Heart right ventricle (tissue), 16 donors: ENCODE measurements at regions of chr14 and their contacts with region 1.

Region 1: DNA sequence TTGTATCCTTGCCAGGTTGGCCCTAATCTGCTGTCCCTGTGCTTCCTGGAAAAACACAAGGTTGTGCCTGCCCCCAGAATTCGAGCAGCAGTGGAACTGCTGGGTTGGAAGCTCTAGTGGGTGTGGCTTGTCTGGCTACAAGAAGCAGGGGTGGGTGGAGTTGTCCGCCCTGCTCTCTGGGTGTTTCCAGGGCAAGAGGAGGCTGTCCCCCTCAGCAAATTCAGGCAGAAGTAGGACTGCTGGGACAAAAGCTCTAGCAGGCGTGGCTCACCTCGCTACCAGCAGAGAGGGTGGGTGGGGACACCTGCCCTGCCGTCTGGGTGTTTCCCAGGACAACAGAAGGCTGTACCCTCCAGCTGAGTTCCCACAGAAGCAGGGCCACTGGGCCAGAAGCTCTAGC is 72.8 kb upstream of the NPAS3 start:
- DNase-seq: no peak
- ATAC-seq: peak in 1 of 8 donors; percentile 42
- H3K4me3 ChIP-seq: no peak overlapping the region
- H3K27ac ChIP-seq: no peak overlapping the region
- H3K4me1 ChIP-seq: peaks cover 0 to 9% (median 0%) of the 10 kb centered on the region in 9 donors
- H3K27me3 ChIP-seq: no peaks in the 10 kb centered on the region
- CTCF ChIP-seq: no peak

Region 2: DNA sequence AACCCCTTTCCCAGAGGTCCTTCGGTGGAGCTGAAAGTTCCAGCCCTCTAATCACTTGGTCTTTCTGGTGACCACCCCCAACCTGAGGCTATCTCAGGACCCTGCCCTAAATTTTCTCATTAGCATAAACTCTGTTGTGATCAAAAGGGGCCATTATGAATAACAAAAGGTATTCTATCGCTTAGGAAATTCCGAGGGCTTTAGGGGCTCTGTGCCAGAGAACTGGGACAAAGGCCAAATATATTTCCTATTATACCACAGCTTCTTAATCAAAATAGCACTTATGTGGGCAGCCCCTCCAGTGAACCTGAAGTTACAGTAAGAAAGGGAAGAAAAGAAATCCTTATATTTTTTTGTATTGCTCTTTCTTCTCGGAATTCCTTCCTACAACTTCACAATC is 52.5 kb before region 1 on chr14:
- intact Hi-C with region 1: no loop called
- DNase-seq: no peak
- ATAC-seq: no peak
- H3K4me3 ChIP-seq: no peak overlapping the region
- H3K27ac ChIP-seq: peak overlapping the region in 1 of 10 donors; percentile 23
- H3K4me1 ChIP-seq: peaks cover 5 to 66% (median 39%) of the 10 kb centered on the region in 9 donors
- H3K27me3 ChIP-seq: no peaks in the 10 kb centered on the region
- CTCF ChIP-seq: no peak

Region 3: GRCh38 chr14:32913719-32914118 is 47.8 kb after region 1 on chr14:
- intact Hi-C with region 1: loop called in 1 of 10 experiments (anchors 2 kb)
- DNase-seq: no peak
- ATAC-seq: no peak
- H3K4me3 ChIP-seq: no peak overlapping the region
- H3K27ac ChIP-seq: no peak overlapping the region
- H3K4me1 ChIP-seq: no peaks in the 10 kb centered on the region
- H3K27me3 ChIP-seq: peaks cover 0 to 15% (median 0%) of the 10 kb centered on the region in 7 donors
- CTCF ChIP-seq: peak in 3 of 9 donors; percentile 14 to 22 (median 19)